ENCODE measurements at regions of chr4 and their contacts with region 1.

Region 1: GRCh38 chr4:33989820-33990443 is 2254.4 kb downstream of the ARAP2 start:
- DNase-seq: no peak
- H3K4me3 Mint-ChIP-seq: no peak overlapping the region
- H3K27ac Mint-ChIP-seq: no peak overlapping the region
- H3K4me1 Mint-ChIP-seq: no peaks in the 10 kb centered on the region
- H3K27me3 Mint-ChIP-seq: no peaks in the 10 kb centered on the region

Region 2: DNA sequence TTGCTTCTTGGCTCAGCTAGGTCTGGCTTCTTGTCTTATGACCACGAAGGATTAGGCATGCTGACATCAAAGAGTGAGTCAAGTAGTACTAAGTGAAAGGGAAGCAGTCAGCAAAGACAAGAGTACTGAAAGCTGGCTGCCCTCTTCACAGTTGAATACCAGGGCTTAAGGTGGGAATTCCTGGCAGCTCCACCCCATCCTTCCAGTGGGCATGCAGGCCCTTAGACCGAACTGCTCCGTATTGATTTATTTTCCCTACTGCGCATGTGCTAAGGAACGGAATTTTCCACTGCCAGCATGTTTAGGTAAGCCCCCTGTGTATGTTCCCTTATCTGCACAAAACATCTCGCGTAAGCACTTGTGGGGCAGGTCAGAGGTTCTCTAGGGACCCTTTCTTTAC is 65.7 kb before region 1 on chr4:
- CTCF ChIA-PET with region 1: no interaction called
- intact Hi-C with region 1: loop called (anchors 10 kb)
- DNase-seq: no peak
- H3K4me3 Mint-ChIP-seq: no peak overlapping the region
- H3K27ac Mint-ChIP-seq: no peak overlapping the region
- H3K4me1 Mint-ChIP-seq: no peaks in the 10 kb centered on the region
- H3K27me3 Mint-ChIP-seq: no peaks in the 10 kb centered on the region